Ovary (tissue), 10 donors: ENCODE measurements at regions of chr13 and their contacts with region 1.

Region 1: GRCh38 chr13:95676762-95677563 is at the start of gene DNAJC3:
- DNase-seq: peak; percentile 98 to 99 (median 98)
- H3K4me3 ChIP-seq: peak within 1 kb of the TSS; percentile 70
- H3K27ac ChIP-seq: peak within 1 kb of the TSS; percentile 85 to 89
- H3K4me1 ChIP-seq: no peaks in the 10 kb centered on the region
- H3K27me3 ChIP-seq: no peaks in the 10 kb centered on the region
- CTCF ChIP-seq: no peak
- EP300 ChIP-seq: no peak
- POLR2A ChIP-seq: peak; percentile 87
- total RNA-seq, gene DNAJC3: 29.6 to 56.7 (median 38.3) TPM

Region 2: DNA sequence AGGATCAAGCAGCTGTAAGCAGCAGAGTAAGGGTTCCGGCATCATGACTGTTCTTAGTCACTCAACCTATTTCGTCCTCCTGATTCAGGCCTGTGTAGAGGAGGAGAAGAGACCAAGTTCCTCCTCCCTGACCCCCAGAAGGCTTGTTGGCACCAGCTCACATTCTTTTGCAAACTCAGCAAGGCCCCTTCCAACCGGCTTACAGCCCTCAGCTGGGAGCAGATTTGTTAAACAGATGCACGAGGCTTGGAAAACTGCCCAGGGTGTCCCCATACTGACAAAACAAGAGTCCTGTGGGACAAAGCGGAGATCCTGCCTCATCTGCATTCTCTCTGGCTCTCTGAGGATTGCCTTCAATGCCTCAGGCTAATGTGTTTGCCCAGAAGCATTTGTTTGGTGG is 851.5 kb before region 1 on chr13:
- intact Hi-C with region 1: no loop called
- DNase-seq: peak; percentile 34 to 74 (median 53)
- H3K4me3 ChIP-seq: no peak overlapping the region
- H3K27ac ChIP-seq: no peak overlapping the region
- H3K4me1 ChIP-seq: no peaks in the 10 kb centered on the region
- H3K27me3 ChIP-seq: no peaks in the 10 kb centered on the region
- CTCF ChIP-seq: no peak
- EP300 ChIP-seq: no peak
- POLR2A ChIP-seq: no peak

Region 3: GRCh38 chr13:95480131-95480545 is 196.8 kb before region 1 on chr13:
- intact Hi-C with region 1: no loop called
- DNase-seq: no peak
- H3K4me3 ChIP-seq: no peak overlapping the region
- H3K27ac ChIP-seq: no peak overlapping the region
- H3K4me1 ChIP-seq: no peaks in the 10 kb centered on the region
- H3K27me3 ChIP-seq: no peaks in the 10 kb centered on the region
- CTCF ChIP-seq: no peak
- EP300 ChIP-seq: no peak
- POLR2A ChIP-seq: no peak

Region 4: DNA sequence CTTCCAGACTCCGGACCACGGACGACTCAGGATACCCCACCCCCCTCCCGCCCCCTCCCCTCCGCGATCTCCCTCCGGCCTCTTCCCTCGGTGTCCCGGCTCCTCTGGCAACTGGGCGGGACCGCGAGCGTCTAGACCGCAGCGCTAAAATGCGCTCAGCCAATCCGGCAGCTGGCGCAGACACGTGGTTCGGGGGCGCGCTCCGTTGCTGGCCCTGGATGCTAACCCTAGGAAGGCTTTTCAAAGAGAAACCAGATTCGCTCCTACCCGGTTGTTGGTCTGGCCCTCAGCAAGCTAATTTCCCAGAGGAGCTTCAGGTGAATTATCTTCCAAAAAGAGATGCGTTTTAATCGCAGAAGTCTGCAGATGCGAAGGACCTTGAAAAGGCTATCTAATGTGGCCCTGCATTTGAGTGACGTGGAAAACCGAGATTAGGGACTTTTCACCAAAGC is 32.3 kb before region 1 on chr13 and contains the start of gene DZIP1:
- intact Hi-C with region 1: loop called in 1 of 4 experiments (anchors 2 kb)
- DNase-seq: peak; percentile 85 to 91 (median 89)
- H3K4me3 ChIP-seq: peak within 1 kb of the TSS; percentile 82
- H3K27ac ChIP-seq: peak within 1 kb of the TSS; percentile 74 to 75
- H3K4me1 ChIP-seq: peaks cover 2% of the 10 kb centered on the region
- H3K27me3 ChIP-seq: no peaks in the 10 kb centered on the region
- CTCF ChIP-seq: no peak
- EP300 ChIP-seq: no peak
- POLR2A ChIP-seq: no peak
- total RNA-seq, gene DZIP1: 22.1 to 55.8 (median 45.2) TPM

Region 5: DNA sequence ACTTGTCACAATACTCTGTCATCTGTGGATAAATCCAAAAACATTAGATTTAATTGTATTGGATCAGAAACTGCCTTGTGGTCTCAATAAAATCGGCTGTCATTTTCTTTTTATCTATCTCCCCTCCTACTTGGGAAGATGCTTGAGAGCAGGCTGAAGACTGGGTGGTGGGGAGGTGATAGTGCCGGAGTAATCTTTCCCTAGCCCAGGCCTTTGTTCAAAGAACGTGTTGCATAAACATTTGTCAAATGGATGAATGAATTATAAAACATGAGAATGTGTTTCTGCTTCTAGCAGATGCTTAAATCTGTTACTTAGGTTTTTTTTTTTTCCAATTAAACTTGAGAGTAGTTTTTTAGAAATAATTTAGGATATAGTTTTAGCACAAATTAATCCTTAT is 49.9 kb after region 1 on chr13:
- intact Hi-C with region 1: loop called in 1 of 4 experiments (anchors 2 kb)
- DNase-seq: no peak
- H3K4me3 ChIP-seq: no peak overlapping the region
- H3K27ac ChIP-seq: no peak overlapping the region
- H3K4me1 ChIP-seq: no peaks in the 10 kb centered on the region
- H3K27me3 ChIP-seq: no peaks in the 10 kb centered on the region
- CTCF ChIP-seq: no peak
- EP300 ChIP-seq: no peak
- POLR2A ChIP-seq: no peak

Region 6: GRCh38 chr13:95741584-95742563 is 64.9 kb after region 1 on chr13:
- intact Hi-C with region 1: no loop called
- DNase-seq: no peak
- H3K4me3 ChIP-seq: no peak overlapping the region
- H3K27ac ChIP-seq: no peak overlapping the region
- H3K4me1 ChIP-seq: peaks cover 2% of the 10 kb centered on the region
- H3K27me3 ChIP-seq: no peaks in the 10 kb centered on the region
- CTCF ChIP-seq: no peak
- EP300 ChIP-seq: no peak
- POLR2A ChIP-seq: no peak